T-cell (primary cell): ENCODE measurements at regions of chr3 and their contacts with region 1.

Region 1: GRCh38 chr3:32510075-32510724 is 7.5 kb upstream of the CMTM6 start:
- DNase-seq: peak; percentile 22 to 79 (median 58)
- ATAC-seq: peak; percentile 84 to 96 (median 88)
- H3K4me3 ChIP-seq: no peak overlapping the region
- H3K4me3 Mint-ChIP-seq: no peak overlapping the region
- H3K27ac ChIP-seq: no peak overlapping the region
- H3K27ac Mint-ChIP-seq: no peak overlapping the region
- H3K4me1 ChIP-seq: no peaks in the 10 kb centered on the region
- H3K4me1 Mint-ChIP-seq: peaks cover 0 to 2% (median 0%) of the 10 kb centered on the region in 3 donors
- H3K27me3 ChIP-seq: no peaks in the 10 kb centered on the region
- H3K27me3 Mint-ChIP-seq: no peaks in the 10 kb centered on the region

Region 2: GRCh38 chr3:32481791-32482631 is 28.2 kb before region 1 on chr3:
- CTCF ChIA-PET with region 1: interaction called in 1 of 2 experiments, 11 read pairs
- POLR2A ChIA-PET with region 1: no interaction called
- DNase-seq: no peak
- ATAC-seq: no peak
- H3K4me3 ChIP-seq: no peak overlapping the region
- H3K4me3 Mint-ChIP-seq: no peak overlapping the region
- H3K27ac ChIP-seq: no peak overlapping the region
- H3K27ac Mint-ChIP-seq: peak overlapping the region; percentile 25 to 66
- H3K4me1 ChIP-seq: peaks cover 0 to 6% of the 10 kb centered on the region in 2 experiments
- H3K4me1 Mint-ChIP-seq: peaks cover 20 to 48% (median 33%) of the 10 kb centered on the region in 3 donors
- H3K27me3 ChIP-seq: no peaks in the 10 kb centered on the region
- H3K27me3 Mint-ChIP-seq: no peaks in the 10 kb centered on the region

Region 3: DNA sequence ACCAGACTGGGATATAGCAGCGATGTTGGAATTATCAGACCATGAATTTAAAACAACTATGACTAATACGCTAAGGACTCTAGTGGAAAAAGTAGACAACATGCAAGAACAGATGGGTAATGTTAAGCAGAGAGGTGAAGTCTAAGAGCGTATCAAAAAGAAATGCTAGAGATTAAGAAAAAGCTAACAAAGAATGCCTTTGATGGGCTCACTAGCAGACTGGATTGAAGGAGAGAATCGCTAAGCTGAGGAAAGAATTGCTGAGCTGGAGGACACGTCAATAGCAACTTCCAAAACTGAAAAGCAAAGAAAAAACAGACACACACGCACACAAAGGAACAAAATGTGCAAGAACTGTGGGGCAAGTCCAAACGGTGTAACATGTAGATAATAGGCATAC is 12.5 kb after region 1 on chr3:
- CTCF ChIA-PET with region 1: interaction called, 3 to 11 read pairs
- POLR2A ChIA-PET with region 1: no interaction called
- DNase-seq: no peak
- ATAC-seq: no peak
- H3K4me3 ChIP-seq: no peak overlapping the region
- H3K4me3 Mint-ChIP-seq: no peak overlapping the region
- H3K27ac ChIP-seq: no peak overlapping the region
- H3K27ac Mint-ChIP-seq: no peak overlapping the region
- H3K4me1 ChIP-seq: no peaks in the 10 kb centered on the region
- H3K4me1 Mint-ChIP-seq: peaks cover 0 to 2% (median 0%) of the 10 kb centered on the region in 3 donors
- H3K27me3 ChIP-seq: no peaks in the 10 kb centered on the region
- H3K27me3 Mint-ChIP-seq: no peaks in the 10 kb centered on the region

Region 4: DNA sequence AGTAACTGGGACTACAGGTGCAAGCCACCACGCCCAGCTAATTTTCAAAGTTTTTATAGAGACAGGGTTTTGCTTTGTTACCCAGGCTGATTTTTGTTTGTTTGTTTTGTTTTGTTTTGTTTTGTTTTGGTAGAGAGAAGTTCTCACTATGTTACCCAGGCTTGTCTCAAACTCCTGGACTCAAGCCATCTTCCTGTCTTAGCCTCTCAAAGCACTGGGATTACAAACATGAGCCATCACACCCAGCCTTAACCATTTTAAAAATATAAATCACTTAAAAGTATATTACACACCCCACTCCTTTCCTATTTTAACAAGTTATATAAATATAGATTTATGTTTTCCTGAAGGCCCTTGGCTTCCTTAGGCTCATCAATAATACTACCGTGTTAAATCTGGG is 67.0 kb after region 1 on chr3:
- CTCF ChIA-PET with region 1: interaction called in 1 of 2 experiments, 3 read pairs
- POLR2A ChIA-PET with region 1: interaction called in 1 of 2 experiments, 15 read pairs
- DNase-seq: no peak
- ATAC-seq: no peak
- H3K4me3 ChIP-seq: no peak overlapping the region
- H3K4me3 Mint-ChIP-seq: peak overlapping the region in 2 of 3 donors; percentile 32 to 45
- H3K27ac ChIP-seq: no peak overlapping the region
- H3K27ac Mint-ChIP-seq: peak overlapping the region in 1 of 2 donors; percentile 80
- H3K4me1 ChIP-seq: peaks cover 6 to 9% of the 10 kb centered on the region in 2 experiments
- H3K4me1 Mint-ChIP-seq: peaks cover 11 to 14% (median 11%) of the 10 kb centered on the region in 3 donors
- H3K27me3 ChIP-seq: peaks cover 0 to 3% of the 10 kb centered on the region in 2 experiments
- H3K27me3 Mint-ChIP-seq: no peaks in the 10 kb centered on the region

Region 5: GRCh38 chr3:33211444-33211843 is 701.2 kb after region 1 on chr3:
- CTCF ChIA-PET with region 1: no interaction called
- POLR2A ChIA-PET with region 1: no interaction called
- DNase-seq: no peak
- ATAC-seq: no peak
- H3K4me3 ChIP-seq: no peak overlapping the region
- H3K4me3 Mint-ChIP-seq: no peak overlapping the region
- H3K27ac ChIP-seq: no peak overlapping the region
- H3K27ac Mint-ChIP-seq: no peak overlapping the region
- H3K4me1 ChIP-seq: no peaks in the 10 kb centered on the region
- H3K4me1 Mint-ChIP-seq: no peaks in the 10 kb centered on the region
- H3K27me3 ChIP-seq: peaks cover 0 to 21% of the 10 kb centered on the region in 2 experiments
- H3K27me3 Mint-ChIP-seq: peaks cover 39 to 41% of the 10 kb centered on the region in 2 donors